ENCODE measurements at regions of chr17 and their contacts with region 1.

Region 1: GRCh38 chr17:16363749-16364536 is 10.7 kb upstream of the CENPV start:
- DNase-seq: peak; percentile 61
- ATAC-seq: peak; percentile 99
- H3K4me3 ChIP-seq: no peak overlapping the region
- H3K27ac ChIP-seq: no peak overlapping the region
- H3K4me1 ChIP-seq: peaks cover 3% of the 10 kb centered on the region; the same call in 1 of the 2 replicates
- H3K27me3 ChIP-seq: no peaks in the 10 kb centered on the region
- CTCF ChIP-seq: peak; percentile 89 to 96 (median 95)
- EP300 ChIP-seq: no peak
- POLR2A ChIP-seq: no peak
- RAD21 ChIP-seq: peak; percentile 93

Region 2: GRCh38 chr17:16150251-16150856 is 213.6 kb before region 1 on chr17:
- CTCF ChIA-PET with region 1: no interaction called
- POLR2A ChIA-PET with region 1: no interaction called
- RAD21 ChIA-PET with region 1: no interaction called
- SMC1A ChIA-PET with region 1: no interaction called
- in situ Hi-C with region 1: no loop called
- intact Hi-C with region 1: no loop called
- DNase-seq: no peak
- ATAC-seq: no peak
- H3K4me3 ChIP-seq: no peak overlapping the region
- H3K27ac ChIP-seq: no peak overlapping the region
- H3K4me1 ChIP-seq: no peaks in the 10 kb centered on the region
- H3K27me3 ChIP-seq: no peaks in the 10 kb centered on the region
- CTCF ChIP-seq: no peak
- EP300 ChIP-seq: no peak
- POLR2A ChIP-seq: no peak
- RAD21 ChIP-seq: no peak

Region 3: DNA sequence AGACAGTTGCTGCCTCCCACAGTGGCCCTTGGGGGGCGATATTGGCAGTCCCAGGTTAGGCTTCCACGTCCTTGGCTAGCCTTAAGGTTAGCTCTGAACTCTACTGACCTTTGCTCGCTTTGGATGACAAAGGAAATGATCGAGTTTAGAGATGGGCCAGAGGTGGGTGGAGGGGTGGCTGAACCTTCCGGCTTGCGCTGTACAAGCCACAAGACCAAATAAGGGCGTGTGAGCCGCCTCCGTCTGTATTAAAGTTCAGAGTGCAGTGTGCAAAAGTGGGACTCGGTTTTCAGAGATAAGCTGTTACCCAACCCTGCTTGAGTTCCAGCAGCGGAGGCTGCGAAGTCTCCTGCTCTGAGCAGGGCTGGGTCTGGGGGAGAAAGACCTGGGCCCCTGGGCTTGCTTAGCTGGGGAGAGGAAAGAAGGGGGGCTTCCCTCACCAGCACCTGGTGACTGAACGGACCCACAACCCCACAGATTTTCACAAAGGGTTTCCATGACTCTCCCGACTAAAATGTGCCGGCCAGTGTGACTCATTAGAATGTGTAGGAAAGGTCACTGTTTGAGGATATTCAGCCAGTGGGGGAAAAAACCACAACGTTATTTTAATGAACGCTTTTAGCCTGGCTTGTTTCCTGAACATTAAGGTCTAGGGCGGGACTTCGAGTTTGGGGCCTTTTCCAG is 77.8 kb before region 1 on chr17:
- CTCF ChIA-PET with region 1: interaction called, 29 read pairs
- POLR2A ChIA-PET with region 1: interaction called, 6 read pairs
- RAD21 ChIA-PET with region 1: interaction called, 30 read pairs
- SMC1A ChIA-PET with region 1: interaction called, 21 read pairs
- in situ Hi-C with region 1: no loop called
- intact Hi-C with region 1: no loop called
- DNase-seq: peak; percentile 96
- ATAC-seq: peak; percentile 89
- H3K4me3 ChIP-seq: peak overlapping the region; percentile 53; the same call in 1 of the 2 replicates
- H3K27ac ChIP-seq: peak overlapping the region; percentile 92
- H3K4me1 ChIP-seq: peaks cover 40% of the 10 kb centered on the region
- H3K27me3 ChIP-seq: no peaks in the 10 kb centered on the region
- CTCF ChIP-seq: peak; percentile 58 to 65 (median 63)
- EP300 ChIP-seq: peak in 1 of 2 experiments; percentile 26; a peak in 1 of 4 replicates
- POLR2A ChIP-seq: peak; percentile 85
- RAD21 ChIP-seq: peak; percentile 59

Region 4: GRCh38 chr17:16380640-16381495 is 16.9 kb after region 1 on chr17 and contains the start of gene UBB:
- CTCF ChIA-PET with region 1: interaction called, 59 read pairs
- POLR2A ChIA-PET with region 1: interaction called, 5 read pairs
- RAD21 ChIA-PET with region 1: interaction called, 12 read pairs
- SMC1A ChIA-PET with region 1: interaction called, 28 read pairs
- in situ Hi-C with region 1: no loop called
- intact Hi-C with region 1: no loop called
- DNase-seq: peak; percentile 89
- ATAC-seq: peak; percentile 97
- H3K4me3 ChIP-seq: peak within 1 kb of the TSS; percentile 76
- H3K27ac ChIP-seq: peak within 1 kb of the TSS; percentile 100
- H3K4me1 ChIP-seq: peaks cover 16% of the 10 kb centered on the region
- H3K27me3 ChIP-seq: no peaks in the 10 kb centered on the region
- CTCF ChIP-seq: peak in 2 of 3 experiments; percentile 20 to 24; a peak in 2 of 6 replicates
- EP300 ChIP-seq: no peak; a peak in 2 of 4 replicates
- POLR2A ChIP-seq: peak; percentile 100
- RAD21 ChIP-seq: no peak
- polyA plus RNA-seq, gene UBB: 4,008 to 4,246 TPM

Region 5: DNA sequence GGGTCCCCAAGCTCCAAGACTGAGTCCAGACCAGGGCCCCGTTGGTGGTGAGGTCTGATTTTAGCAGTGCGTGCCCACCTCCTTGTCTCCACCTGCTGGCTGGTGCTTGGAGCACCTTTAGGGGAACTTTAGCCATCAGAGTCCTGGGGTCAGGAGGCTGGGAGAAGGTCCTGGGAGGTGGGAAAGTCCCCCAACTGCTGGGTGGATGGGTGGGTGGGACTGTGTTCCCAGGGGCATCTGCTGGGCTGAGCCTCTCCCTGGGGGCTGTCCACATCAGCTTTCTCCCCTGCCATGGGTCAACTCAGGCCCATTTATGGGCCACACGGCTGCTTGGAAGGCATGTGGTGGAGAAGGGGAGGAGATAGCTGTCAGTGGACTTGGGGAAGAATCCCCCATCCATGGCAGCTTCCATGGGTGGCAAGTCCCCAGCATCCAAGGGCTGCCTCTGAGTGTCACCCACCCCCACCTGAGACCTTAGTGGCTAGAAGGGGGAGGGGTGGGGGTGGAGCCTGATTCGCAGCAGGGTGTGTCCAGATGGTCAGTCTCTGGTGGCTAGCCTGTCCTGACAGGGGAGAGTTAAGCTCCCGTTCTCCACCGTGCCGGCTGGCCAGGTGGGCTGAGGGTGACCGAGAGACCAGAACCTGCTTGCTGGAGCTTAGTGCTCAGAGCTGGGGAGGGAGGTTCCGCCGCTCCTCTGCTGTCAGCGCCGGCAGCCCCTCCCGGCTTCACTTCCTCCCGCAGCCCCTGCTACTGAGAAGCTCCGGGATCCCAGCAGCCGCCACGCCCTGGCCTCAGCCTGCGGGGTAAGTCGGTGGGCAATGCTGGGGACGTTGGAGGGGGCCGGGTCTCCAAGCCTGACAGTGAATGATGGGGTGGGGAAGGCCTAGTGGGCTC is 51.3 kb after region 1 on chr17 and contains the start of gene TRPV2:
- CTCF ChIA-PET with region 1: interaction called, 127 read pairs
- POLR2A ChIA-PET with region 1: interaction called, 20 read pairs
- RAD21 ChIA-PET with region 1: interaction called, 86 read pairs
- SMC1A ChIA-PET with region 1: interaction called, 61 read pairs
- in situ Hi-C with region 1: no loop called
- intact Hi-C with region 1: loop called (anchors 1 kb)
- DNase-seq: peak; percentile 60
- ATAC-seq: peak; percentile 67
- H3K4me3 ChIP-seq: peak within 1 kb of the TSS; percentile 95
- H3K27ac ChIP-seq: peak within 1 kb of the TSS; percentile 81
- H3K4me1 ChIP-seq: peaks cover 46% of the 10 kb centered on the region
- H3K27me3 ChIP-seq: no peaks in the 10 kb centered on the region
- CTCF ChIP-seq: peak; percentile 87 to 91 (median 87)
- EP300 ChIP-seq: no peak
- POLR2A ChIP-seq: peak; percentile 64
- RAD21 ChIP-seq: peak; percentile 94
- polyA plus RNA-seq, gene TRPV2: 8.9 to 29.2 TPM

Region 6: GRCh38 chr17:16444258-16444886 is 80.4 kb after region 1 on chr17:
- CTCF ChIA-PET with region 1: interaction called, 35 read pairs
- POLR2A ChIA-PET with region 1: no interaction called
- RAD21 ChIA-PET with region 1: interaction called, 16 read pairs
- SMC1A ChIA-PET with region 1: interaction called, 23 read pairs
- in situ Hi-C with region 1: no loop called
- intact Hi-C with region 1: no loop called
- DNase-seq: no peak
- ATAC-seq: peak; percentile 6
- H3K4me3 ChIP-seq: no peak overlapping the region
- H3K27ac ChIP-seq: no peak overlapping the region
- H3K4me1 ChIP-seq: peaks cover 11% of the 10 kb centered on the region
- H3K27me3 ChIP-seq: no peaks in the 10 kb centered on the region
- CTCF ChIP-seq: no peak
- EP300 ChIP-seq: no peak
- POLR2A ChIP-seq: peak; percentile 12; the same call in 1 of the 2 replicates
- RAD21 ChIP-seq: no peak

Region 7: GRCh38 chr17:16537130-16537458 is 173.2 kb after region 1 on chr17:
- CTCF ChIA-PET with region 1: interaction called, 11 read pairs
- POLR2A ChIA-PET with region 1: interaction called, 3 read pairs
- RAD21 ChIA-PET with region 1: interaction called, 9 read pairs
- SMC1A ChIA-PET with region 1: interaction called, 5 read pairs
- in situ Hi-C with region 1: no loop called
- intact Hi-C with region 1: no loop called
- DNase-seq: no peak
- ATAC-seq: no peak
- H3K4me3 ChIP-seq: no peak overlapping the region
- H3K27ac ChIP-seq: no peak overlapping the region
- H3K4me1 ChIP-seq: 0 out of 2 replicates have a peak, but pooled peaks cover 4% of the 10 kb centered on the region
- H3K27me3 ChIP-seq: no peaks in the 10 kb centered on the region
- CTCF ChIP-seq: no peak
- EP300 ChIP-seq: no peak
- POLR2A ChIP-seq: no peak
- RAD21 ChIP-seq: no peak